Posterior cingulate gyrus (tissue), 11 donors: ENCODE measurements at regions of chr9 and their contacts with region 1.

Region 1: GRCh38 chr9:117782931-117783788 is 79.0 kb downstream of the TLR4 start:
- DNase-seq: peak; percentile 67 to 97 (median 86)

Region 2: DNA sequence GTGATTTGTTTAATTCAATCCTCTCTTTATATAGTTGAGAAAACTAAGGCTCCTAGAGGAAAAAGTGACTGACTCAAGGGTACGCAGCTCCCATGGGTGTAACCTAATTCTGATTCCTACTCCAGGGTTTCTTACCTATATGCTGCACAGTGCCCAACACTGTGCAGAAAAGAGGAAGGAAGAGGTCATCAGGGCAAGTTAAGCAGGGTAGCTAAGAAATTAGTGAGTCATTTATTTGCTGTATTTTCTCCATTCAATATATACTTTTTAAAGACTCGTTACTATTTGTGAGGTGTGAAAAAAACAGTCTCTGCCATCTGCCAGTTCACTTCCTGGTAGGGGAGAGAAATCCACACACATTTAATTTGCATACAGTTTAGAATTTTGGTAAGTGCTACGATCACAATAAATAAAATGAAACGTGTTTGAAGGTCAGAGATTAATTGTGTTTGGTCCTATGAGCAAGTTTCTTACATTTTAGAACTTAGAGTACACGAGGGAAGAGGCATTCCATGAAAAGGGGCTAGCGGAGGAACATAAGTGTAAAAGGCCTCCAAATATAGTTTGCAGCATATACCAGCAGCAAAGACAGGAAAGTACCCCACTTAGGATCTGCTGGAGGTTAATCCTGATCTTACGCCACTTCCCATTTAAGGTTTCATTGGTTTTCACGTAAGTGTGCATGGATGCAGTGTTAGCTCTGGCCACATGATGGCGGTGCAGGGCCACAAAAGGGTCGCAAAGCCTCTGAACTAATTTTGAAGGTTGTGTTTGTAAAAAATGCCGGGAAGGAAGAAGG is 138.8 kb before region 1 on chr9:
- intact Hi-C with region 1: loop called (anchors 1 kb)
- DNase-seq: peak; percentile 63 to 96 (median 83)

Region 3: GRCh38 chr9:118170032-118170955 is 387.1 kb after region 1 on chr9:
- intact Hi-C with region 1: loop called (anchors 10 kb)
- DNase-seq: peak; percentile 51 to 95 (median 74)

Region 4: GRCh38 chr9:119289740-119290433 is 1506.7 kb after region 1 on chr9:
- intact Hi-C with region 1: loop called (anchors 10 kb)
- DNase-seq: peak in 1 of 10 donors; percentile 29